Astrocyte of the cerebellum (primary cell): ENCODE measurements at regions of chr4 and their contacts with region 1.

Region 1: DNA sequence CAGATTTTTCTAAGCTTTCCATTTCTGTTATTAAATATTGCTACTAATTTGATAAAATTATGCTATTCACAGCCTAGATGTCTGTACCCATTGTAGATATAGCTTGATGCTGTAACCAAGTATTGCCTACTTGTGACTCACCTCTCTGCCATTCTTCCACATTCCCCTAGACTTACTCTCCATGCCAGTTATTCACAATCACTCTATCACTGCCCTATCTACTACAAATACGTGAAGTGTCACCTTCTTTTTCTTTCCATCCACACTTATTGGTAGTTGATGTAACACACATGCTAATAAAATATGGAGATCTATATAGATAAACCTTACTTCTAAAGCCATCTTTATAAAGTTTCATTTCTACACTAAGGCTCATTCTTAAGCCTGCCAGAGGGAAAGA is 179.4 kb upstream of the PACRGL start:
- DNase-seq: no peak
- H3K4me3 ChIP-seq: no peak overlapping the region
- CTCF ChIP-seq: no peak

Region 2: DNA sequence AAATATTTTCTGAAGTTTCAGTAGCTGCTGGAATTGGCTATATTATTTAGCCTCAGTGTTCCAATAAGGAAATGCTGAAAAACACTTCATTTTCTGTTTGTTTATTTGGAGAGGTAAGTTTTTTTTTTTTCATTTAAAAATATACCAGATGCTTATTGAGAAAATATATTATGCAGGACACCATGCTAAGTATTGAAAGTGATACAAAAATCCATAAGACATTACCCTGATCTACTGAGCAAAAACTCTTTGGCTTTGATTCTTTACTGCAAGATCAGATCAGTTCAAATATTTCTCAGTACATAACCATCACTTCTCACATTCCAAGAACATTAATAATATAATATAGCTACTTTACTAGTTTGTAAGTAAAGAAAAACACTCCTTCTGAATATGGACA is 56.0 kb after region 1 on chr4:
- in situ Hi-C with region 1: loop called (anchors 5 kb)
- DNase-seq: no peak
- H3K4me3 ChIP-seq: no peak overlapping the region
- CTCF ChIP-seq: no peak

Region 3: GRCh38 chr4:20592663-20593062 is 71.8 kb after region 1 on chr4:
- in situ Hi-C with region 1: no loop called
- DNase-seq: no peak
- H3K4me3 ChIP-seq: no peak overlapping the region
- CTCF ChIP-seq: no peak

Region 4: GRCh38 chr4:20612313-20612712 is 91.4 kb after region 1 on chr4:
- in situ Hi-C with region 1: loop called (anchors 5 kb)
- DNase-seq: peak; percentile 64
- H3K4me3 ChIP-seq: no peak overlapping the region
- CTCF ChIP-seq: no peak